ENCODE measurements at regions of chr3 and their contacts with region 1.

Region 1: GRCh38 chr3:24264748-24265158 is 229.9 kb downstream of the THRB start:
- DNase-seq: no peak
- ATAC-seq: peak in 1 of 2 donors; percentile 56

Region 2: DNA sequence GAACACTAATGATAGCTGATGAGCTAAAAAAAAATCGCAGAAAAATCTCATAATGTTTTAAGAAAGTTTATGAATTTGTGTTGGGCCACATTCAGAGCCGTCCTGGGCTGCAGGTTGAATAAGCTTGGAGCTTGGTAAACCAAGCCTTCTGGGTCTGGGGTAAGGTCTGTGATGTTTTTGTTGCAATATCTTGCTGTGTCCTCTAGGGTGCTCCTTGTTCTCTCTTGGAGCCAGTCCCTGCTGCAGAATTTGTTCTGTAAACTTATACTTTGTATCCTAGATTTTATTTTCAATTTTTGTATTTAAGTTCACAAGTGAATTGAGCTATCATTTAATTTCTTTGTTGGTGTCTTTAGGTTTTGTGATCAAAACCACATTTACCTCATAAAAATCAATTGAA is 176.0 kb before region 1 on chr3:
- intact Hi-C with region 1: no loop called
- DNase-seq: no peak
- ATAC-seq: no peak

Region 3: DNA sequence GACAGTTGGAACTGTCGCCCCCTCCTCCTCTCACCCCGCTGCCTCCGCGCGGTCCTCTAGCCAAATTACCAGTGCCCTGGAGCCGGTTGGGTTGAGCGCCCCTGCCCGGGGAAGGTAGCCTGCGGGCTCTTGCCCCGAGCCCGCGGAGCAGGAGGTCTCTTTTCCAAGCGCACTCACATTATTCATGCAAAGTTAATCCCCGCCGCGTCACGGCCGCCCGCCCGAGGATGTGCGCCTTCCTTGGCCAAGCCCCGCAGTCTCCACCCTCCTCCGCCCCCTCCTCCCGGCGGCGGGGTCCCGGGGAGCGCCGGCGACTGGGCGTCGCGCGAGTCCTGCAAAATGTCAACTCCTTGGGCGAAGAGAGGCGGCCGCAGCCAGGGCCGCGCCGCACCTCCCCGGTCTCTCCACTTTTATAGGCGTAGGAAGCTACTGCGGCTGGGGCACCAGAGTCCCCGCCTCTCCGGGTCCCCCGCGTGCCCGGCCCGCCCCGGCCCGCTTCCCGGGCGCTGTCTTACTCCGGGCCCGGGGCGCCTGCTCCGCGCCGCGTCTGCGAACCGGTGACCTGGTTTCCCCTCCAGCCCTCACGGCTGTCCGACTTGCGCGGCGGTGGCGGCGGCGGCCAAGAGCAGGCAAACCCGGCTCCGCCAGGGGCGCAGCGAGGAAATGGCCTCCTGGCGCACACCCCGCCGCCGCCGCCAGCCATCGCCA is 230.0 kb after region 1 on chr3 and contains the start of gene THRB:
- intact Hi-C with region 1: loop called (anchors 5 to 10 kb)
- DNase-seq: peak; percentile 82
- ATAC-seq: peak; percentile 78 to 82
- total RNA-seq, gene THRB: 8.3 to 15.4 TPM

Region 4: GRCh38 chr3:24582431-24583403 is 318.0 kb after region 1 on chr3:
- intact Hi-C with region 1: loop called in 1 of 2 experiments (anchors 10 kb)
- DNase-seq: no peak
- ATAC-seq: no peak

Region 5: GRCh38 chr3:24640330-24640877 is 375.7 kb after region 1 on chr3:
- intact Hi-C with region 1: loop called in 1 of 2 experiments (anchors 10 kb)
- DNase-seq: no peak
- ATAC-seq: peak; percentile 47 to 79

Region 6: DNA sequence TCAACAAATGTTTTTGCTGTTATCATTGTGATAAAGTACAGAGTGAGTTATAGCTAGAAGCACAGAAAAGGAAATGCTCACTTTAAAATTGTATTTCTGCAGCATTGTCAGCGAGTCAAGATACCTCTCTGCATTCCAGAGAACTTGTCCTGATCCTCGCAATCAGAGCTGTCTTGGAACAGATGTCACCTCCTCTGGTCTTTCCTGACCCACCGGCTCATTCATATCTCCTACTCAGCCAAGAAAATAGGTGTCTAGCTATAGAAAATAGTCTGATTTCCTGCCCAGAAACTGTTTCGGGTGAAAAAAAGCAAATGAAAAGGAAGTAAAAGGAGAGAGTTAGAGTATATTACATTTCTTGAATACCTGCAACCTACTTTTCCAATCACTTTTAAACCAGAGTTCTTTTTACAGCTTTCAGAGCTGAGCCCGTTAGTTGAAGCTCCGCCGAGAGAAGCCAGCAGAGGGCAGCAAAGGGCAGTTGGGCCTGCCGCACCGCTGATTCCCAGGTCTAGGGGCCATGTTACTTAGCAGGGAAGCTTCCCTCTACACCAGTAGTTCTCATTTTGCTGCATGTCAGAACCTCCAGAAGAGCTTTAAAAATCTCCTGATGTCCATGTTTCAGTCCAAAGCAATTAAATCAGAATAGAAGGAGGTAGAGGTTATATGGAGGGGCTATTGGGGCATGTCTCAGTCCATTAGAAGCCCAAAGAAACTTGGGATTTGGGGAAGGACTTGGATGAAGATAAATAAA is 415.6 kb after region 1 on chr3:
- intact Hi-C with region 1: loop called in 1 of 2 experiments (anchors 10 kb)
- DNase-seq: peak; percentile 66
- ATAC-seq: peak; percentile 78 to 86

Region 7: DNA sequence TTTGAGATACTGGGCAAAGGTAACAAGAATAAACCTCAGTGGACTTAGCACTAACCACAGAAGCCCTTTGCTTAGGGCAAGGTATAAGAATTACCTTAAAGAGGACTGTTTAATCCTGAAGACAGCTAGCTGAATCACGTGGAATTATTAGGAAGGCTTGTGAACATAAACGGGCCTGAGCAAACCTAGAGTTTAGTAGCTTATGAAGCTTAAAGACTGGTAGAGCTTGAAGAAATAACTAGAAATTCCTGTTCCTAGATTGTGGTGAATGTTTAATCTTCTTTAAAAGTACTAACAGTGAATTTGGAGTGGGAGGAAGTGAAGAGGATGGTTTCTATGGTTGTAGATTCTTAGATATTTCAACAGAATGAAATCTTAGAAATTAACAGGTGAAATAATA is 658.8 kb after region 1 on chr3:
- intact Hi-C with region 1: no loop called
- DNase-seq: no peak
- ATAC-seq: no peak

Measured in left cardiac atrium (tissue), 4 donors.